ENCODE measurements at regions of chr4 and their contacts with region 1.

Region 1: DNA sequence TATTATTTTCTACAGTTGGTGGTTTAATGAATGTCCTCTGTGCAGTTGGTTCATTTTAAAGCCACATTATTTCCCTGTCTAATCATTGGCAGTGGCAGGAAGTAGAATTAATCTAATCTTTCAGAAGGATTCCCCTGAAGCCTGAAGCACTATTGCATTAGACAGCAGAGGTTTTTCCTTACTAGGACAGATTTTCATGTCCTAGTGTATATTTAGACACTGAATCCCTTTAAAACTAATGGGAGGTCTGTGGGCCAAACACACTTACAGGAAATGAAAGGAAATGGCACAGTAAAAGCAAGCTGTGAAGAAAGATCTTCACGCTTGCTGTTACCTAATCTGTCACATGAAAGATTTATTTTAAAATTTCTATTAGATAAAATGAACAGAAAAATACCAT is 165.2 kb downstream of the SLC39A8 start:
- DNase-seq: no peak
- ATAC-seq: no peak
- H3K4me3 ChIP-seq: no peak overlapping the region
- H3K4me3 Mint-ChIP-seq: no peak overlapping the region
- H3K27ac ChIP-seq: no peak overlapping the region
- H3K27ac Mint-ChIP-seq: no peak overlapping the region
- H3K4me1 ChIP-seq: no peaks in the 10 kb centered on the region
- H3K4me1 Mint-ChIP-seq: no peaks in the 10 kb centered on the region
- H3K27me3 ChIP-seq: no peaks in the 10 kb centered on the region
- H3K27me3 Mint-ChIP-seq: peaks cover 0 to 2% of the 10 kb centered on the region in 2 donors

Region 2: GRCh38 chr4:102022343-102022742 is 157.7 kb before region 1 on chr4:
- CTCF ChIA-PET with region 1: no interaction called
- POLR2A ChIA-PET with region 1: no interaction called
- DNase-seq: no peak
- ATAC-seq: no peak
- H3K4me3 ChIP-seq: no peak overlapping the region
- H3K4me3 Mint-ChIP-seq: no peak overlapping the region
- H3K27ac ChIP-seq: no peak overlapping the region
- H3K27ac Mint-ChIP-seq: no peak overlapping the region
- H3K4me1 ChIP-seq: no peaks in the 10 kb centered on the region
- H3K4me1 Mint-ChIP-seq: no peaks in the 10 kb centered on the region
- H3K27me3 ChIP-seq: peaks cover 0 to under 1% of the 10 kb centered on the region in 2 experiments
- H3K27me3 Mint-ChIP-seq: peaks cover 0 to 10% of the 10 kb centered on the region in 2 donors

Region 3: GRCh38 chr4:102196221-102196620 is 16.2 kb after region 1 on chr4:
- CTCF ChIA-PET with region 1: no interaction called
- POLR2A ChIA-PET with region 1: interaction called in 1 of 2 experiments, 16 read pairs
- DNase-seq: no peak
- ATAC-seq: no peak
- H3K4me3 ChIP-seq: no peak overlapping the region
- H3K4me3 Mint-ChIP-seq: no peak overlapping the region
- H3K27ac ChIP-seq: no peak overlapping the region
- H3K27ac Mint-ChIP-seq: no peak overlapping the region
- H3K4me1 ChIP-seq: peaks cover 0 to 22% of the 10 kb centered on the region in 2 experiments
- H3K4me1 Mint-ChIP-seq: peaks cover 8 to 21% (median 13%) of the 10 kb centered on the region in 3 donors
- H3K27me3 ChIP-seq: no peaks in the 10 kb centered on the region
- H3K27me3 Mint-ChIP-seq: no peaks in the 10 kb centered on the region

Region 4: GRCh38 chr4:102321260-102321995 is 141.4 kb after region 1 on chr4:
- CTCF ChIA-PET with region 1: no interaction called
- POLR2A ChIA-PET with region 1: no interaction called
- DNase-seq: no peak
- ATAC-seq: no peak
- H3K4me3 ChIP-seq: no peak overlapping the region
- H3K4me3 Mint-ChIP-seq: no peak overlapping the region
- H3K27ac ChIP-seq: no peak overlapping the region
- H3K27ac Mint-ChIP-seq: no peak overlapping the region
- H3K4me1 ChIP-seq: peaks cover 0 to 2% of the 10 kb centered on the region in 2 experiments
- H3K4me1 Mint-ChIP-seq: peaks cover 35 to 40% (median 36%) of the 10 kb centered on the region in 3 donors
- H3K27me3 ChIP-seq: no peaks in the 10 kb centered on the region
- H3K27me3 Mint-ChIP-seq: no peaks in the 10 kb centered on the region